Psoas muscle (tissue), 8 donors: ENCODE measurements at regions of chr14 and their contacts with region 1.

Region 1: DNA sequence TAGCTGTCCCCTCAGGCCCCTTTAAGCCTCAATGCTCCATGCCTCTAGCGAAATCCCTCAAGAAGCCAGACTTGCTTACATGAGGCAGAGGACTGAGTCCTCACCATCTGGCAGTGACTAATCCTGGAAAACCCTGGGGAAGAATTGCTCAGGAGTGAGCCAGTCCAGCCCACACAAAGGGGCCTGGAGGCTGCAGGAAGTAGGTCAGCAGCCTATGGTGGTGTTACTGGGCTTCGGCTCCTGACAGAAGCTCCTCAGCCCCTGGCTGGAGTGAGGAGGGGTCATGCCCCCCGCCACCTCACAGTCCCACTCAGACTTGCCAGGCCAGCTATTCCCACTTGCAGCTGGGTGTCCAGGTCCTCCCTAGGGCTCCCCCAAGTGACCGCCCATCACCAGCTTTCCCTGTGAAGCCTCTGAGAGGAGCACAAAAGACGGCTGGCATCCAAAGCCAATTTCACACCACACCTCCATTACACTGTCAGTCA is 250.5 kb downstream of the DPF3 start:
- DNase-seq: peak; percentile 55 to 69
- ATAC-seq: peak; percentile 86 to 95 (median 92)
- H3K4me3 ChIP-seq: no peak overlapping the region
- H3K27ac ChIP-seq: peak overlapping the region; percentile 49
- H3K4me1 ChIP-seq: peaks cover 12% of the 10 kb centered on the region
- H3K27me3 ChIP-seq: no peaks in the 10 kb centered on the region
- CTCF ChIP-seq: no peak

Region 2: GRCh38 chr14:72544619-72545387 is 98.6 kb before region 1 on chr14:
- intact Hi-C with region 1: loop called in 1 of 2 experiments (anchors 5 kb)
- DNase-seq: no peak
- ATAC-seq: peak; percentile 16 to 63 (median 36)
- H3K4me3 ChIP-seq: no peak overlapping the region
- H3K27ac ChIP-seq: no peak overlapping the region
- H3K4me1 ChIP-seq: peaks cover 26% of the 10 kb centered on the region
- H3K27me3 ChIP-seq: no peaks in the 10 kb centered on the region
- CTCF ChIP-seq: no peak